KBM-7 (cell line): ENCODE measurements at regions of chrX and their contacts with region 1.

Region 1: DNA sequence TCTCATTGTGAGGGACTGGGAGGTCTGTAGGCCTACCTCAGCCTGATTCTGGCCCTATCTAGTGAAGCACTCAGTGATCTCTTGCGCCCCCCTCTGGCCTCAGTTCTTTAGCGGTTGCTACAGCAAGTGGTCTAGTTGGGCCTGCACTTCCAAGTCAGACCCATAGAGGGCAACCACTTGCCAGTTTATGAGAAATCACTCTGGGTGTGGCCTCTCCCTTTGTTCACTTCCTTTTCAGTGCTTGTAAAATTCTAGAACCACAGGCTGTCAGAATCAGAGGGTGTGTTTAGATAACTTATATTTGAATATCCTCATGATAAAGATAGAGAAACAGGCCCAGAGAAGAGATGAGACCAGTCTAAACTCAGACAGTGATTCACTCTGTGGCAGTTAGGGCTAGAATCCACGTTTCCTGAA is 60.9 kb upstream of the LAS1L start:
- DNase-seq: peak; percentile 100

Region 2: GRCh38 chrX:66015152-66015831 is 419.8 kb after region 1 on chrX:
- in situ Hi-C with region 1: loop called (anchors 25 kb)
- DNase-seq: peak; percentile 99

Region 3: GRCh38 chrX:66110112-66110511 is 514.6 kb after region 1 on chrX:
- in situ Hi-C with region 1: loop called (anchors 25 kb)
- DNase-seq: peak; percentile 83

Region 4: GRCh38 chrX:66728818-66729271 is 1133.4 kb after region 1 on chrX:
- in situ Hi-C with region 1: loop called (anchors 25 kb)
- DNase-seq: peak; percentile 92